A673 (cell line): ENCODE measurements at regions of chr2 and their contacts with region 1.

Region 1: DNA sequence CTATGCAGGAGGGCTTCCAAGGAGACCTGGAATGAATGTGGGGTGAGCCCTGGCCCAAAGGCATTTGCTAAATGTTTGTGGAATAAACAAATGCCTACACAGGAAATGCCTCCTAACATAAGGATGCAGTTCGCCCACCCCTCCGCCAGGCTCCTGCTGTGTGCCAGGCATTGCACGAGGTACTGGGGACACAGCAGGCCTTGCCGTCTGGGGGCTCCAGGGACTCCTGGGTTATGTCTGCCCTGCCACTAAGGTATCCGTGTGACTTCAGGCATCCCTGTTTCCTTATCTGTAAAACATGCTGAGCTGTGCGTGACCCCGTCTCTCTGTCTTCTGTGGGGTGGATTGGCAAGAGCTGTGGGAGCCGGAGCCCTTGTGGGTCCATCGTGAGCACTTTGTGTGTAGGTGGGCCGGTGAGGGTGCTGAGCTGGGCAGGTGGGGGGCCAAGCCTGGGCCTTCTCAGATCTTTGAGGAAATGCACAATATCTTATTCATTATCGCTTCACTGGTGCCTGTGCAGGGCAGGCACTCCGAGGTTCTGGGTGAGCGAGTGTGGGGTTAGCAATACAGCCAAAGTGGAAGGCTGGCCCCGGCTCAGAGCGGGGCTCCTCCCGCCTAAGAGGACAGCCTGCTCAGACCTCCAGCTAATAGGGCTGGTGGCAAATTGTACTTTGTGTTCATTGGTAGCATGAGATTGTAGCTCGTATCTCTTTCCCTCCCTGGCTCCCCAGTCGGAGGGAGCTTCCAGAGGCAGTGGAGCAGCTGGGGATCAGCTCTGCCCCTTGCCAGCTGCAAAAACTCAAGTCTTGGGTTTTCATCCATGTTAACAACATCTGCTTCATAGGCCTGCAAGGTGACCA is 126.8 kb downstream of the GLI2 start:
- DNase-seq: no peak
- H3K4me3 ChIP-seq: no peak overlapping the region
- H3K27ac ChIP-seq: no peak overlapping the region
- H3K4me1 ChIP-seq: peaks cover 10% of the 10 kb centered on the region
- H3K27me3 ChIP-seq: no peaks in the 10 kb centered on the region
- CTCF ChIP-seq: no peak

Region 2: GRCh38 chr2:120809609-120810440 is 52.6 kb before region 1 on chr2:
- CTCF ChIA-PET with region 1: interaction called, 11 read pairs
- POLR2A ChIA-PET with region 1: no interaction called
- intact Hi-C with region 1: no loop called
- DNase-seq: peak; percentile 84
- H3K4me3 ChIP-seq: no peak overlapping the region
- H3K27ac ChIP-seq: peak overlapping the region; percentile 9
- H3K4me1 ChIP-seq: peaks cover 19% of the 10 kb centered on the region
- H3K27me3 ChIP-seq: no peaks in the 10 kb centered on the region
- CTCF ChIP-seq: no peak